HEK293 (cell line): ENCODE measurements at regions of chrX and their contacts with region 1.

Region 1: DNA sequence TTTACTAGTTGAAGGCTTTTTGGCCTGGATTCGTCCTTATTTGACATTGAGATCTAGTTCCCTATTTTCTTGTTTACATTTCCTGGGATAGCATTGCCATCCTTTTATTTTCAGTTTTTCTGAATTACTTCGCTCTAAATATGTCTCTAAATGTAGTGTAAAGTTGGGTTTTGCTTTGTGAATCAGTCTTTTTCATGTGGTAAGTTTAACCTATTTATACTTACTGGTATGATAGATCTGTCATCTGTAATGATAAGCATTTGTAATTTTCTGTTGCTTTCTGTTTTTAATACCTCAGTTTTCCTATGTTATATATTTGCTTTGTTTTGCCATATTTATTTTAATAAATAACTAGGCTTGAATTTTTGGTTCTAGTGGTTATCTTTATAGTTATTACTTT is 6.7 kb downstream of the PDK3 start:
- H3K4me3 ChIP-seq: no peak overlapping the region
- H3K27ac ChIP-seq: no peak overlapping the region
- H3K4me1 ChIP-seq: peaks cover 5% of the 10 kb centered on the region
- CTCF ChIP-seq: no peak

Region 2: GRCh38 chrX:24069877-24070276 is 401.9 kb before region 1 on chrX:
- CTCF ChIA-PET with region 1: no interaction called
- POLR2A ChIA-PET with region 1: interaction called, 10 read pairs
- H3K4me3 ChIP-seq: no peak overlapping the region
- H3K27ac ChIP-seq: no peak overlapping the region
- H3K4me1 ChIP-seq: no peaks in the 10 kb centered on the region
- CTCF ChIP-seq: no peak

Region 3: DNA sequence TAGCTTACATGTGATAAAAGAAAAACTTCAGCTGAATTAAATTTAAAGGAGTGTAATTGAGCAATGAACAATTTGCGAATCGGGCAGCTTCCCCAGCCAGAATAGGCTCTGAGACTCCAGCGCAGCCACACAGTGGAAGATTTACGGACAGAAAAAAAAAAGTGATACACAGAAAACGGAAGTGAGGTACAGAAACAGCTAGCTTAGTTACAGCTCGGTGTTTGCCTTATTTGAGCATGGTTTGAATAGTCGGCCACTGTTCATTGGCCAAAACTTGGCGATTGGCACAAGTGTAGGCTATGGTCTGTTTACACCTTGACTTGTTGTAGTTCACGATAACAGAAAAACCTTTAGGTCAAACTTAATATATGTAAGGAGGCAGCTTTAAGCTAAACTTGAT is 128.1 kb before region 1 on chrX:
- CTCF ChIA-PET with region 1: no interaction called
- POLR2A ChIA-PET with region 1: no interaction called
- H3K4me3 ChIP-seq: no peak overlapping the region
- H3K27ac ChIP-seq: no peak overlapping the region
- H3K4me1 ChIP-seq: no peaks in the 10 kb centered on the region; the same call in 1 of the 2 replicates
- CTCF ChIP-seq: no peak

Region 4: DNA sequence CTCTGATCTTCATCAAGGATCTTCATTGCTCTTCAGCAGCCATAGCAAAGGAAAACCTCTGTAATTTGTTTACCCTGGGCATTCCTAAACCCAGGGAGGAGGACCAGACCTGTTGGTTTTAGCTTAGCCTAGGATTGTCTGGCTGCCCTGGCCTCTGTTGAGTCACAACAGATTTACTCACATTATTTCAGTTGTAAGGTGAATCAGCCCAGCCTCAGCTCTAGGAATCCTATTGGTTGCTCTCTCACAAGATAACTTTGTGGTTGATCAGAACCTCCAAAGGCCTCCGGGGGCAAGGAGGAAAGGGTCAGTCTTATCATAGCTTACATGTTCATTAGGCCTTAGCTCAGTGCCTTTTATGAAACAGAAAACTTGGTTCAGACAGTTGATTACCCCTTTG is 34.2 kb after region 1 on chrX:
- CTCF ChIA-PET with region 1: no interaction called
- POLR2A ChIA-PET with region 1: no interaction called
- H3K4me3 ChIP-seq: no peak overlapping the region
- H3K27ac ChIP-seq: no peak overlapping the region
- H3K4me1 ChIP-seq: no peaks in the 10 kb centered on the region
- CTCF ChIP-seq: no peak